AG04450 (cell line): ENCODE measurements at regions of chr3 and their contacts with region 1.

Region 1: GRCh38 chr3:150146991-150147761 is 176.5 kb upstream of the PFN2 start:
- DNase-seq: peak; percentile 85
- H3K4me3 ChIP-seq: peak overlapping the region; percentile 47
- H3K27ac ChIP-seq: peak overlapping the region; percentile 92
- H3K27me3 ChIP-seq: no peaks in the 10 kb centered on the region
- CTCF ChIP-seq: no peak

Region 2: GRCh38 chr3:150106740-150107428 is 40.3 kb before region 1 on chr3:
- CTCF ChIA-PET with region 1: interaction called, 4 read pairs
- POLR2A ChIA-PET with region 1: interaction called, 15 read pairs
- DNase-seq: peak; percentile 78
- H3K4me3 ChIP-seq: no peak overlapping the region
- H3K27ac ChIP-seq: peak overlapping the region; percentile 86
- H3K27me3 ChIP-seq: no peaks in the 10 kb centered on the region
- CTCF ChIP-seq: no peak

Region 3: GRCh38 chr3:150183678-150184425 is 36.7 kb after region 1 on chr3:
- CTCF ChIA-PET with region 1: interaction called, 11 read pairs
- POLR2A ChIA-PET with region 1: interaction called, 11 read pairs
- DNase-seq: peak; percentile 46
- H3K4me3 ChIP-seq: peak overlapping the region; percentile 57
- H3K27ac ChIP-seq: no peak overlapping the region
- H3K27me3 ChIP-seq: no peaks in the 10 kb centered on the region
- CTCF ChIP-seq: peak; percentile 81